HEK293 (cell line): ENCODE measurements at regions of chr7 and their contacts with region 1.

Region 1: GRCh38 chr7:50631100-50631499 is 65.9 kb upstream of the DDC start:
- H3K4me3 ChIP-seq: no peak overlapping the region
- H3K27ac ChIP-seq: no peak overlapping the region
- H3K4me1 ChIP-seq: no peaks in the 10 kb centered on the region
- CTCF ChIP-seq: no peak

Region 2: DNA sequence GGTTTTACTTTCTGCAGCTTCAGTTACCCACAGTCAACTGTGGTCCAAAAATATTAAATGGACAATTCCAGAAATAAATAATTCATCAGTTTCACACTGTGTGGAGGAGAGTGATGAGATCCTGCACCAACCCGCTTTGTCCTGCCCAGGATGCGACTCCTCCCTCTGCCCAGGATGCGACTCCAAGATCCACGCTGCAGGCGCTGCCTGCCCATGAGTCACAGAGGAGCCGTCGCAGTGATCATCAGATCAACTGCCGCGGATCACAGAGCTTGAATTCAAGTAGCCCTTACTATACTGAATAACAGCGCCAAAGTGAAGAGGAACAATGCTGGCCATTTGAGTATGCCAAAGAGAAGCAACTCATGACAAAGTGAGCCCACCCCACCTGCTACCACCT is 90.1 kb after region 1 on chr7:
- CTCF ChIA-PET with region 1: no interaction called
- POLR2A ChIA-PET with region 1: no interaction called
- H3K4me3 ChIP-seq: no peak overlapping the region
- H3K27ac ChIP-seq: no peak overlapping the region
- H3K4me1 ChIP-seq: peaks cover 24% of the 10 kb centered on the region
- CTCF ChIP-seq: no peak

Region 3: DNA sequence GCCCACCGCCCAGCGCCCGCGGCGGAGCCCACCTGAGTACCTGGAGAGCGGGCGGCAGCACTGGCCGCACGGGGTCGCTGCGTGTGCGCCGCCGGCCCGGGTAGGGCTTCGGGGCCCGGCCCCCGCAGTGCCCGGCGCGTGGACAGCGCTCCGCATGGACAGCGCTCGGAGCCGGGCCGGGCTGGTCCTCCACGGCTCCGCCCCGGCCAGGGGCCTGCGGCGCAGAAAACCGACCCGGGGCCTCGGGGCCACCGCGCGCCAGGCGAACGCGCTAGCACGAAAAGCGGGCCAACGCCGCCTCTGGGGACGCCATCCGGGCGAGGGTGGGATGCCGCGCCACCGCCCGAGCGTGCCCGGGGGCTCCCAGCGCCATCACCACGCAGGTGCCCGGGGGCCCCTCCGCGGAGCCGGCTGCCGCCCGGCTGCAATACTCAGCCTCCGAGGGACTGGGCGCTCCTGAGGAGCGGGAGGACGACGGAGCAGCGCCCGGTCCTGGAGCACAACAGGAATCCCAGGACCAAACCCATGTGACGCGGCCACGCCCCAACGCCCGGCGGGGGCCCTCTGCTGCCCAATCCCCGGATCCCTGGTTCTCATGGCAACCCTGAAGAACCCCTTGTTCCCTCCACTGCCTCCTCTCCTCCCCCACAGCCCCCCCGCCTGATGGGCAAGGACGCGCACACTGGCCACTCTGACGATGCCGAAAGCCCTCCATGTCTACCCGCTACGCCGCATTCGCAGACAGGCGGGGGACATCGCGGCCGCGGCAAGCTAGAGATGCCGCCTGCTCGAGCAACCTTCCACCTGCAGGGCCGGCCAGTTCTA is 151.5 kb after region 1 on chr7 and contains the start of gene GRB10:
- CTCF ChIA-PET with region 1: no interaction called
- POLR2A ChIA-PET with region 1: no interaction called
- H3K4me3 ChIP-seq: peak within 1 kb of the TSS; percentile 36
- H3K27ac ChIP-seq: no peak within 1 kb of the TSS
- H3K4me1 ChIP-seq: peaks cover 8% of the 10 kb centered on the region; the same call in 1 of the 2 replicates
- CTCF ChIP-seq: no peak

Region 4: DNA sequence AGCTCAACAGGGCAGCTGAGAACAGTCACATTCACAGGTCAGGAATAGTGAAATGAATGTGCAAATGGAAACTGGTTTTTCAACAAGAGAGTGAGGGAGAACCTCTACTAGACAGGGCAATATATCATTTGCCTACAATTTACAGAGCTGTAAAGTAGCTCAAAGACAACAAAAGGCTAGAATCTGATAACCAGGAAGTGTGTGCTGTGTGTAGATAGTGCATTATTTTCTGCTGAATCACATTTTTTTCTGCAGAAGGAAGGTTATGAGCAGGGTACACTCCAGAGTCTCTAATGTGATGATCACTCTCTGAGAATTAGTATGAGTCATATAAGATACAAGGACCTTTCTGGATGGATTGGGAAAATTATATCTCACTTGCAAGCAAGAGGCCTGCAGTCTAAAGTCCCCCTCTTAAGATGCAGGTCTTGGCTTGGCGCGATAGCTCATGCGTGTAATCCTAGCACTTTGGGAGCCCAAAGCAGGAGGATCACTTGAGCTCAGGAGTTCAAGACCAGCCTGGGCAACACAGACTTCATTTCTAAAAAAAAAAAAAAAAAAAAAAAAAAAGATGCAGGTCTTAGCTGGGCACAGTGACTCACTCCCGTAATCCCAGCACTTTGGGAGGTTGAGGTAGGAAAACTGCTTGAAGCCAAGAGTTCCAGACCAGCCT is 745.5 kb after region 1 on chr7:
- CTCF ChIA-PET with region 1: no interaction called
- POLR2A ChIA-PET with region 1: interaction called, 10 read pairs
- H3K4me3 ChIP-seq: no peak overlapping the region
- H3K27ac ChIP-seq: no peak overlapping the region
- H3K4me1 ChIP-seq: no peaks in the 10 kb centered on the region
- CTCF ChIP-seq: no peak